ENCODE measurements at regions of chr2 and their contacts with region 1.

Region 1: DNA sequence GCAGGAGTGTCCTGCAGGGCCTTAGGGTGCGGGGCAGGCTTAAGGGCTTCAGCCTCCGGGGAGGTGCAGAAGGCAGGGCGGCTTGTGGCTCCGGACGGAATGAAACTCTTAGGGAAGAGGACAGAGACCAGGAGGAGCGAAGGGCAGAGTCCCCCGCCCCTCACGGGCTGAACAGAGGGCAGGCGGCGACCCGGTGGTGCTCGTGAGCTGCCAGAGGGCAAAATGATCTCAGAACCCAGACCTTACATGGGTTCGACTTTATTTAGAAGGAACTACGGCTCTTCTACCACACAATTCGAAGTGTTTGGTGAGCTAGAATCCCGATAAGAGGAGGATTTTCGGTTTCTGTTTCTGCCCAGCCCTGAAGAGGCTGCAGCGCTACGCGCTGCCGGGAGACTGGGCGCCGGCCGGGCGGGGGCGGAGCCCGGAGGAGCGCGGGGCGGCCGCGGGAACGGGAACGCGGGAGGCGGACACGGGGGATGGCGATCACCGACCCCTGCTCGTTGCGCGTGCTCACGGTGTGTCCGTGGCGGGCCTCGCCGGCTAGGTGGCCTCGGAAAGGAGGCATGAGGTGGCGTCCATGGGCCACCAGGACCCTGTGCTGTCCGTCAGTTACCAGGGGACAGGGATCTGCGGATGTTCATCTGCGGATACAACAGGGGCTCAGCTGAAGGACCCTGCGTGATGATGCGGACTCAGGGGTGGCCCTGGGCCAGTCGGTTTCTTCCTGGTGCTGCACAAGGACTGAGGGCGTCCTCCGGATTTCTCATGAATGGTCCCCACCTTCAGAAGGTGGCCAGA is 4.2 kb upstream of the SP100 start:
- DNase-seq: peak; percentile 76
- H3K4me3 Mint-ChIP-seq: peak overlapping the region; percentile 93
- H3K27ac Mint-ChIP-seq: peak overlapping the region; percentile 99
- H3K4me1 Mint-ChIP-seq: peaks cover 79% of the 10 kb centered on the region
- H3K27me3 Mint-ChIP-seq: no peaks in the 10 kb centered on the region

Region 2: DNA sequence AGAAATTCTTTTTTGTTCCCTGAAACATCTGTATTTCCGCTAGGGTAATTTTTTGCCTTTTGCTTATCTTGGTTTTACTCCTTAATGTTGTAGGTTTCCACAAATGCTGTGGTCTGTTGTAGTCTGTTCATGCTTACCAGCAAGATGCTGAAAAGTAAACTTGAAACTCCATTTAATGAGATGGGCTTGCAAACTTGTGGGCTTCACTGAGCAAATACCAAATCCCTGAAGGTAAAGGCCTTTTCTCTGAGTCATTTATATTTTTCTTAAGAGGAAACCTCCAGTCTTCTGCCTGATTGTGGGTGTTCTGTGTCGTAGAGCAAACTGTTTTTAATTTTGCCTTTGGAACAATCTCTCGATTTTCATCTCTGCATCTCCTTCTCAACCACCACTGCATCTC is 176.9 kb before region 1 on chr2:
- intact Hi-C with region 1: loop called (anchors 1 kb)
- DNase-seq: no peak
- H3K4me3 Mint-ChIP-seq: peak overlapping the region; percentile 72
- H3K27ac Mint-ChIP-seq: peak overlapping the region; percentile 96
- H3K4me1 Mint-ChIP-seq: peaks cover 60% of the 10 kb centered on the region
- H3K27me3 Mint-ChIP-seq: no peaks in the 10 kb centered on the region

Region 3: GRCh38 chr2:230326453-230327417 is 85.0 kb before region 1 on chr2 and contains the start of gene SP140L:
- intact Hi-C with region 1: loop called (anchors 1 kb)
- DNase-seq: peak; percentile 73
- H3K4me3 Mint-ChIP-seq: peak within 1 kb of the TSS; percentile 98
- H3K27ac Mint-ChIP-seq: peak within 1 kb of the TSS; percentile 93
- H3K4me1 Mint-ChIP-seq: peaks cover 87% of the 10 kb centered on the region
- H3K27me3 Mint-ChIP-seq: no peaks in the 10 kb centered on the region
- total RNA-seq, gene SP140L: 57.4 and 57.8 TPM in 2 replicates

Region 4: GRCh38 chr2:230425377-230425776 is 13.6 kb after region 1 on chr2:
- intact Hi-C with region 1: loop called (anchors 1 kb)
- DNase-seq: no peak
- H3K4me3 Mint-ChIP-seq: peak overlapping the region; percentile 0
- H3K27ac Mint-ChIP-seq: no peak overlapping the region
- H3K4me1 Mint-ChIP-seq: peaks cover 76% of the 10 kb centered on the region
- H3K27me3 Mint-ChIP-seq: no peaks in the 10 kb centered on the region

Region 5: DNA sequence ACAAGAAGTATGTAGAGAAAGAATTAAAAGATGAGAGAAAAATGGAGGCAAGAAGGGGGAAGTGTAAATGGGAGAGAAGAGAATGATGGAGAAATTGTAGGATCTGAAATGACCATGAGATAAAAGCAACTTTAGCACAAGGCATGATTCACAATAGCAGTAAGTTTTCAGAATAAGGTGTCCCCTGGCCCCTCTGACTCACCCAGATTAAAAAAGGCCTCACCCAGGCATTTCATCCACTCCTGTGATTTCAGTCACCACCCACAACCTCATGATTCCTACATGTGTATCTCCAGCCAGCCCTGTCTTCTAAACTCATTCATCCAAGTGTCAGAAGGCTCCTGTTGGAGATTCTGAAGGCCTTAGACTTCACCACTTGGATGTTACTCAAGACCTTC is 60.9 kb after region 1 on chr2:
- intact Hi-C with region 1: loop called (anchors 2 kb)
- DNase-seq: peak; percentile 11
- H3K4me3 Mint-ChIP-seq: peak overlapping the region; percentile 1
- H3K27ac Mint-ChIP-seq: peak overlapping the region; percentile 85
- H3K4me1 Mint-ChIP-seq: peaks cover 48% of the 10 kb centered on the region
- H3K27me3 Mint-ChIP-seq: no peaks in the 10 kb centered on the region

Measured in activated T-helper 1 cell treated with anti-CD3 and anti-CD28 coated beads, Interleukin-12 subunit alpha, Interleukin-12 subunit beta, Interleukin-2, Interleukin-4 antibody, amounts not matched to agents 30 ng/mL and 10 ng/mL and 1 ng/mL, durations not matched to agents 14 hours and 24 hours and 36 hours (primary cell).